Posterior vena cava (tissue), 2 donors: ENCODE measurements at regions of chr3 and their contacts with region 1.

Region 1: GRCh38 chr3:7226393-7226792 is 365.5 kb downstream of the GRM7 start:
- DNase-seq: no peak

Region 2: DNA sequence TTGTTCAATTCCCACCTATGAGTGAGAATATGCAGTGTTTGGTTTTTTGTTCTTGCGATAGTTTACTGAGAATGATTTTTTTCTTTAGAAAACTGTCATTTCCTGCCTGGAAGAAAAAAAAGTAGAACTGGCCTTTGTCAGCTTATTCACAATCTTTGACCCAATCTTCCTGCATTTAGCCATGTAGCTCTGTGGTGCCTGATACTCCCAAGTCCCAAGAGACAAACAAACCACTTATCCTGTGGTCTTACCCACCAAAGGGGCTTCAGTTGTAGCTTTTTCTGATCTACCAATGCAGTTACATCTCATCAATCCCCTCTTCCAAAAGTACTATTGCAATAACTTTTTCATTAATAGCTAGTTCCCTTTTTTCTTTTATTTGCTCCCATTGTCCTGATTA is 79.2 kb after region 1 on chr3:
- intact Hi-C with region 1: loop called in 1 of 2 experiments (anchors 2 kb)
- DNase-seq: no peak

Region 3: DNA sequence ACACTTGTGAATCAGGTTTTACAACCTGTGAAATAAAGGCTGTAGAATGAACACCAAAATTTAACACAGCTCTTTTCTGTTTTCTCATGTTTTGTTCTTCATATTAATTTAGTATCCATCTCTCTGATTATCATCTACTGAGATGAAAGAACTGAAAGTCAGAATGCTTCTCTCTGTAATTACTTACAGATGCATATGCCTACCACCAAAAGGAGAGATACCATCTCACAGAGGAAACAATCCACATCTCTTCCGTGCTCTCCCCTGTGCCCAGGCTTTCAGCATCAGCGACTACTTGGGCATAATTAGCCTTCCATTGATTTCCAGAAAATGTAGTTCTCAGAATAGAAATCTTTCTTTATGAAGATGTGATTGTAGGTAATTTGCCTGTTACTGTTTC is 375.9 kb after region 1 on chr3:
- intact Hi-C with region 1: no loop called
- DNase-seq: no peak